ENCODE measurements at regions of chr9 and their contacts with region 1.

Region 1: DNA sequence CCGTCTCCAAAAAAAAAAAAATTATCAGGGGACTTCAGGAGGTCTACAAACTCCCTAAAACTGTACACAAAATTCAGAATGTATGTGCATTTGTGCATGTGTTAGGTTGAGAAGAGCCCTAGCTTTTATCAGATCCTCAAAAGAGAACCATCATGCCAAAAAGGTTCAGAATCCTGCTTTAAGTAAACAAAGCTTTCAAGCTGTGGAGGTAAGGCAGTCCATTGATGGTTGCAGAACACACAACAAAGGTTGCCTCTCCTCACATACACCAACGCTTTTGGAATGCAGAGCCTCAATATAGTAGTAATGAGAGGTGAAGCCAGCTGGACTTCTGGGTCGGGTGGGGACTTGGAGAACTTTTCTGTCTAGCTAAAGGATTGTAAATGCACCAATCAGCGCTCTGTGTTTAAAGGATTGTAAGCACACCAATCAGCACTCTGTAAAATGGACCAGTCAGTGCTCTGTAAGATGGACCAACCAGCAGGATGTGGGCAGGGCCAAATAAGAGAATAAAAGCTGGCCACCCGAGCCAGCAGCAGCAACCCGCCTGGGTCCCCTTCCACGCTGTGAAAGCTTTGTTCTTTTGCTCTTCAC is 57.9 kb upstream of the RNF38 start:
- DNase-seq: no peak
- H3K4me3 Mint-ChIP-seq: peak overlapping the region; percentile 78
- H3K27ac Mint-ChIP-seq: peak overlapping the region; percentile 86
- H3K4me1 Mint-ChIP-seq: peaks cover 46% of the 10 kb centered on the region
- H3K27me3 Mint-ChIP-seq: no peaks in the 10 kb centered on the region

Region 2: GRCh38 chr9:36492865-36493264 is 34.9 kb after region 1 on chr9:
- intact Hi-C with region 1: loop called (anchors 2 kb)
- DNase-seq: peak; percentile 82
- H3K4me3 Mint-ChIP-seq: peak overlapping the region; percentile 78
- H3K27ac Mint-ChIP-seq: peak overlapping the region; percentile 74
- H3K4me1 Mint-ChIP-seq: peaks cover 36% of the 10 kb centered on the region
- H3K27me3 Mint-ChIP-seq: no peaks in the 10 kb centered on the region